ENCODE measurements at regions of chr1 and their contacts with region 1.

Region 1: GRCh38 chr1:28886731-28887418 is 27.5 kb upstream of the EPB41 start:
- DNase-seq: peak; percentile 94
- ATAC-seq: peak; percentile 89 to 92
- H3K4me3 ChIP-seq: peak overlapping the region; percentile 95
- H3K27ac ChIP-seq: peak overlapping the region; percentile 87
- H3K4me1 ChIP-seq: peaks cover 49% of the 10 kb centered on the region
- H3K27me3 ChIP-seq: no peaks in the 10 kb centered on the region
- CTCF ChIP-seq: peak; percentile 11

Region 2: GRCh38 chr1:28437934-28438699 is 448.8 kb before region 1 on chr1:
- intact Hi-C with region 1: no loop called
- DNase-seq: peak; percentile 84
- ATAC-seq: peak; percentile 100
- H3K4me3 ChIP-seq: peak overlapping the region; percentile 48
- H3K27ac ChIP-seq: peak overlapping the region; percentile 82
- H3K4me1 ChIP-seq: peaks cover 16% of the 10 kb centered on the region
- H3K27me3 ChIP-seq: no peaks in the 10 kb centered on the region
- CTCF ChIP-seq: no peak

Region 3: GRCh38 chr1:29033829-29034466 is 147.1 kb after region 1 on chr1:
- intact Hi-C with region 1: loop called (anchors 5 kb)
- DNase-seq: no peak
- ATAC-seq: peak; percentile 49 to 56
- H3K4me3 ChIP-seq: no peak overlapping the region
- H3K27ac ChIP-seq: no peak overlapping the region
- H3K4me1 ChIP-seq: no peaks in the 10 kb centered on the region
- H3K27me3 ChIP-seq: no peaks in the 10 kb centered on the region
- CTCF ChIP-seq: peak; percentile 66

Region 4: GRCh38 chr1:29197585-29197924 is 310.7 kb after region 1 on chr1:
- intact Hi-C with region 1: loop called (anchors 10 kb)
- DNase-seq: no peak
- ATAC-seq: peak; percentile 82 to 84
- H3K4me3 ChIP-seq: no peak overlapping the region
- H3K27ac ChIP-seq: no peak overlapping the region
- H3K4me1 ChIP-seq: peaks cover 17% of the 10 kb centered on the region
- H3K27me3 ChIP-seq: no peaks in the 10 kb centered on the region
- CTCF ChIP-seq: peak; percentile 41